IMR-90 (cell line): ENCODE measurements at regions of chr19 and their contacts with region 1.

Region 1: GRCh38 chr19:1269065-1269477 is at the start of gene CIRBP:
- DNase-seq: peak; percentile 98
- ATAC-seq: peak; percentile 76
- H3K4me3 ChIP-seq: peak within 1 kb of the TSS; percentile 68
- H3K27ac ChIP-seq: peak within 1 kb of the TSS; percentile 75
- H3K4me1 ChIP-seq: peaks cover 41% of the 10 kb centered on the region
- H3K27me3 ChIP-seq: no peaks in the 10 kb centered on the region
- CTCF ChIP-seq: no peak
- POLR2A ChIP-seq: peak; percentile 99
- RAD21 ChIP-seq: no peak
- total RNA-seq, gene CIRBP: 226 and 299 TPM in 2 replicates

Region 2: DNA sequence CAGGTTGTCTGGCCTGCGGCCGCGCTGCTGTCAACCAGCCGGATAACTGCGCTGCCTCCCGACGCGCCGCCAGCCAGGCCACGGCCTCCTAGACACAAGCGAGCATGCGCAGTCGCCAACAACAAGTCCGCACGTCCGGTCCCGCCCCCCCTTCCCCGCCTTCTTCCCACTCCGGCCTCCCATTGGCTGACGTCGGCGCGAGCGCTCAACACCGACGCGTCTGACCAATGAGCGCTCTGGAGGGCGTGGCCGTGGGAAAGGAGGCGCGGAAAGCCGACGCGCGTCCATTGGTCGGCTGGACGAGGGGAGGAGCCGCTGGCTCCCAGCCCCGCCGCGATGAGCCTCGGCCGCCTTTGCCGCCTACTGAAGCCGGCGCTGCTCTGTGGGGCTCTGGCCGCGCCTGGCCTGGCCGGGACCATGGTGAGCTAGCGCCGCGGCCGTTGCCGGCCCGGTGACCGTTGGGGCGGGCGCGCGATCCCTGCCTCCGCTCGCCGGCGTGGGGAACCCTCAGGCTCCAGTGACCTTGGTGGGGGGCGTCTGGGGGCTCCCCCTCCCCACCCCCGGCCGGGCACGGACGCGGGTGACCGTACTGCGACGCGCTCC is 165.3 kb before region 1 on chr19 and contains the start of gene GPX4:
- CTCF ChIA-PET with region 1: no interaction called
- POLR2A ChIA-PET with region 1: interaction called, 10 read pairs
- dilution Hi-C with region 1: no loop called
- in situ Hi-C with region 1: no loop called
- intact Hi-C with region 1: no loop called
- DNase-seq: peak; percentile 99
- ATAC-seq: peak; percentile 70
- H3K4me3 ChIP-seq: peak within 1 kb of the TSS; percentile 85
- H3K27ac ChIP-seq: peak within 1 kb of the TSS; percentile 97
- H3K4me1 ChIP-seq: peaks cover 12% of the 10 kb centered on the region
- H3K27me3 ChIP-seq: no peaks in the 10 kb centered on the region
- CTCF ChIP-seq: no peak
- POLR2A ChIP-seq: peak; percentile 98
- RAD21 ChIP-seq: 0 out of 2 replicates have a peak, but pooled peaks have one; percentile 7
- total RNA-seq, gene GPX4: 357 and 415 TPM in 2 replicates

Region 3: DNA sequence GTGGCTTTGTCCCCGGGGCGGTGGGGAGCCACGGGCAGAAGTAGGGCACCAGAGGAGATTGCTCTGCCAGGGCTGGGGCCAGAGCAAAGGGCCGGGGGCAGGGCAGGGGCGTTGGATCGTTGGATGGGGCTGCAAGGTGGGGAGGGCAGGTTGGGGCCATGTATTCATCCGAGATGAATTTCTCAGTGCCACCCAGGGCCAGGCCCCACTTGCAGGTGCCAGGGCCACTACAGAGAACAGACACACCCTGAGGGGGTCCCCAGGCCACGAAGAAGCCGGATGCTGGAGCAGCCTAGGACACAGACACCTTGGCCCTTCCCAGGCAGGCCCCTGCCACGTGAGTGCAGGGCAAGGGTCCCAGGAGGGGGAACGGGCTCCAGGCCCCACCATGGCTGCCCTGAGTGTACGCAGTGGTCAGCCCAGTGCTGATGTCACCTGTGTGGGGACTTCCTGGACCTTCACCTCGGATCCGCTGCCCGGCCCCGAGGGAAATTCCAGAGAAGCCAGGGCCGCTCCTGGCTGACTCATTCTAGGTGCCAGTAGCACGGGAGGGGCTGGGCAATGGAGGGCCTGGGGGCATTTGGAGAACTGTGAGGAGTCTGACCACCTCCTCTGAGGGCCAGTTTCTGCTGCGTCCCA is 85.4 kb before region 1 on chr19:
- CTCF ChIA-PET with region 1: no interaction called
- POLR2A ChIA-PET with region 1: no interaction called
- dilution Hi-C with region 1: no loop called
- in situ Hi-C with region 1: no loop called
- intact Hi-C with region 1: no loop called
- DNase-seq: peak; percentile 25
- ATAC-seq: no peak
- H3K4me3 ChIP-seq: no peak overlapping the region
- H3K27ac ChIP-seq: no peak overlapping the region
- H3K4me1 ChIP-seq: peaks cover 8% of the 10 kb centered on the region
- H3K27me3 ChIP-seq: no peaks in the 10 kb centered on the region
- CTCF ChIP-seq: no peak
- POLR2A ChIP-seq: no peak
- RAD21 ChIP-seq: no peak

Region 4: DNA sequence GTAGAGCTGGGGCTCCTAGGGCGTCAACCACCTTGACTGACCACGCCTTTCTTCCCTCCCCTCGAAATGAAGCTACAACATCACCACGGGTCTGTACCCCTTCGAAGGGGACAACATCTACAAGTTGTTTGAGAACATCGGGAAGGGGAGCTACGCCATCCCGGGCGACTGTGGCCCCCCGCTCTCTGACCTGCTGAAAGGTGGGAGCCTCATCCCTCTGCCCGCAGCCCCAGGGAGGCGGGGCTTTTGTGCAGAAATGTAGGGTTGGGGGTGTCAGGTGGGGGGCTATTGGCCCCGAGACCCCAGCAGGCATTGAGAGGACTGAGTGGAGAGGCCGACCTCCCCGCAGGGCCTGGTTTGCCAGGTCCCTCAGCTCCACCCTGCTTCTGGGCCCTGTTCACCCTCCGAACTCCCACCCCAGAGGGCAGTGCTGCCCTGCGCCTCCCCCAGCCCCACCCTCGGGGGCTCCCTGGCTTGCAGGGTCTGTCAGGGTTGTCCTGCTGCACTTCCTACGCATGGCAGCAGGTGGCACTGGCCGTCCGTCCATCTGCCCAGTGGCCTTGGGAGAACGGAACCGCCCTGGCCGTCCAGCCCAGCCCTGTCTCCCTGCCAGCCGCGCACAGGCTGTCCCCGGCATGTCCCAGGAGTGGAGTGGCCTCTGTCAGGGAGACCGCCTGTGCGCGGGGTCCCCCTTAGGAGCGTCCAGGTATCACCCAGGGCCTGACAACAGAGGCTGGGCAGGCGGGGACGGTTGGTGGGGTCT is 47.7 kb before region 1 on chr19:
- CTCF ChIA-PET with region 1: interaction called, 3 read pairs
- POLR2A ChIA-PET with region 1: no interaction called
- dilution Hi-C with region 1: no loop called
- in situ Hi-C with region 1: no loop called
- intact Hi-C with region 1: loop called (anchors 2 kb)
- DNase-seq: peak; percentile 54
- ATAC-seq: peak; percentile 76
- H3K4me3 ChIP-seq: no peak overlapping the region
- H3K27ac ChIP-seq: no peak overlapping the region
- H3K4me1 ChIP-seq: no peaks in the 10 kb centered on the region
- H3K27me3 ChIP-seq: no peaks in the 10 kb centered on the region
- CTCF ChIP-seq: peak; percentile 62
- POLR2A ChIP-seq: no peak; the same call in 1 of the 2 replicates
- RAD21 ChIP-seq: peak; percentile 55

Region 5: DNA sequence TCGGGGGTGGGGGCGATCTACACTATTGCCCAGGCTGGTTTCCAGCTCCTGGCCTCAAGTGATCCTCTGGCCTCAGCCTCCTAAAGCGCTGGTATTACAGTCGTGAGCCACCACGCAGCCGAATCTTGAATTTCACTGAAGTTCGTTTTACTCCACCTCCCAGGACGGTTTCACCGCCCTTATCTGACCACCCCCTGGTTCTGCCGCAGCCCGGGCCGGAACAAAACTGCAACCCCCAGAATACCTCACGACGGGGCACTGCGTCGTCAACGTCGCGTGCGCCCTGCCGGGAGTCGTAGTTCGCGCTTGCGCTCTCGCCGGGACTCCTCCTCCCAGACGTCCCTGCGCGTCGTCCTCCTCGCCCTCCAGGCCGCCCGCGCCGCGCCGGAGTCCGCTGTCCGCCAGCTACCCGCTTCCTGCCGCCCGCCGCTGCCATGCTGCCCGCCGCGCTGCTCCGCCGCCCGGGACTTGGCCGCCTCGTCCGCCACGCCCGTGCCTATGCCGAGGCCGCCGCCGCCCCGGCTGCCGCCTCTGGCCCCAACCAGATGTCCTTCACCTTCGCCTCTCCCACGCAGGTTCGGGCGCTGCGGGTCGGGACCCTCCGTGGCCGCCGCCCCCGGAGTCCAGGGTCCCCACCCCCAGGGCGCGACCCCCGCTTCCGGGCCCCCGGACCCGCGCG is 27.5 kb before region 1 on chr19 and contains the start of gene ATP5F1D:
- CTCF ChIA-PET with region 1: interaction called, 64 read pairs
- POLR2A ChIA-PET with region 1: interaction called, 62 read pairs
- dilution Hi-C with region 1: no loop called
- in situ Hi-C with region 1: no loop called
- intact Hi-C with region 1: loop called (anchors 1 kb)
- DNase-seq: peak; percentile 95
- ATAC-seq: peak; percentile 66
- H3K4me3 ChIP-seq: peak within 1 kb of the TSS; percentile 76
- H3K27ac ChIP-seq: peak within 1 kb of the TSS; percentile 83
- H3K4me1 ChIP-seq: peaks cover 25% of the 10 kb centered on the region
- H3K27me3 ChIP-seq: no peaks in the 10 kb centered on the region
- CTCF ChIP-seq: no peak
- POLR2A ChIP-seq: peak; percentile 56; the same call in 1 of the 2 replicates
- RAD21 ChIP-seq: no peak
- total RNA-seq, gene ATP5F1D: 7.3 and 13.6 TPM in 2 replicates

Region 6: GRCh38 chr19:1249298-1249989 is 19.6 kb before region 1 on chr19:
- CTCF ChIA-PET with region 1: interaction called, 64 read pairs
- POLR2A ChIA-PET with region 1: interaction called, 62 read pairs
- dilution Hi-C with region 1: no loop called
- in situ Hi-C with region 1: no loop called
- intact Hi-C with region 1: loop called (anchors 1 kb)
- DNase-seq: peak; percentile 96
- ATAC-seq: peak; percentile 38
- H3K4me3 ChIP-seq: peak overlapping the region; percentile 94
- H3K27ac ChIP-seq: peak overlapping the region; percentile 98
- H3K4me1 ChIP-seq: peaks cover 20% of the 10 kb centered on the region
- H3K27me3 ChIP-seq: no peaks in the 10 kb centered on the region
- CTCF ChIP-seq: no peak
- POLR2A ChIP-seq: peak; percentile 97
- RAD21 ChIP-seq: no peak

Region 7: DNA sequence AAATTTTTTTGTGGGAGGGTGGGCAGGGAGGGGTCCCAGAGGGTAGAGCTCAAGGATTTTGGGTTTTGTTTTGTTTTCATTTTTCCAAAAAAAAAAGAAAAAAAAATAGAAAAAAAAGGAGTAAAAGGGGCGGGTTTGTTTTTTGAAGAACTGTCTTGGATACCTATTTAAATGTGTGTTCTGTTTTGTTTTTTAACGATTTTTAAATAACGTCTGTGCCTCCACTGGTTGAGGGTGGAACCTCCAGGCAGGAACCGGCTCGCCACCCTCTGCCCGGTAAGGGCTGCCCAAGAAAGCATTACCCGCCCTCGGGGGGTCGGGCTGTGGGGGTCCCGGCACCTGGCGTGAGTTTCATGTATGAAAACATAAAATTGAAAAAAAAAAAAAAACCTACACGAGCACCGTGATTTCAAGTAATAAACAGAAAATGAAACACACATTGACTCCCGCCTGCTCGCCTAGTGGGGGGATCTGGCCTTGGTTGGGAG is 10.3 kb before region 1 on chr19:
- CTCF ChIA-PET with region 1: interaction called, 11 read pairs
- POLR2A ChIA-PET with region 1: interaction called, 28 read pairs
- dilution Hi-C with region 1: no loop called
- in situ Hi-C with region 1: no loop called
- intact Hi-C with region 1: loop called (anchors 1 kb)
- DNase-seq: no peak
- ATAC-seq: no peak
- H3K4me3 ChIP-seq: no peak overlapping the region
- H3K27ac ChIP-seq: peak overlapping the region; percentile 74
- H3K4me1 ChIP-seq: peaks cover 57% of the 10 kb centered on the region
- H3K27me3 ChIP-seq: no peaks in the 10 kb centered on the region
- CTCF ChIP-seq: no peak
- POLR2A ChIP-seq: no peak
- RAD21 ChIP-seq: no peak

Region 8: GRCh38 chr19:1406774-1407499 is 137.9 kb after region 1 on chr19:
- CTCF ChIA-PET with region 1: no interaction called
- POLR2A ChIA-PET with region 1: interaction called, 10 read pairs
- dilution Hi-C with region 1: no loop called
- in situ Hi-C with region 1: no loop called
- intact Hi-C with region 1: no loop called
- DNase-seq: peak; percentile 97
- ATAC-seq: peak; percentile 89
- H3K4me3 ChIP-seq: peak overlapping the region; percentile 63
- H3K27ac ChIP-seq: peak overlapping the region; percentile 83
- H3K4me1 ChIP-seq: peaks cover 25% of the 10 kb centered on the region
- H3K27me3 ChIP-seq: no peaks in the 10 kb centered on the region
- CTCF ChIP-seq: peak; percentile 46
- POLR2A ChIP-seq: no peak; the same call in 1 of the 2 replicates
- RAD21 ChIP-seq: peak; percentile 36

Region 9: DNA sequence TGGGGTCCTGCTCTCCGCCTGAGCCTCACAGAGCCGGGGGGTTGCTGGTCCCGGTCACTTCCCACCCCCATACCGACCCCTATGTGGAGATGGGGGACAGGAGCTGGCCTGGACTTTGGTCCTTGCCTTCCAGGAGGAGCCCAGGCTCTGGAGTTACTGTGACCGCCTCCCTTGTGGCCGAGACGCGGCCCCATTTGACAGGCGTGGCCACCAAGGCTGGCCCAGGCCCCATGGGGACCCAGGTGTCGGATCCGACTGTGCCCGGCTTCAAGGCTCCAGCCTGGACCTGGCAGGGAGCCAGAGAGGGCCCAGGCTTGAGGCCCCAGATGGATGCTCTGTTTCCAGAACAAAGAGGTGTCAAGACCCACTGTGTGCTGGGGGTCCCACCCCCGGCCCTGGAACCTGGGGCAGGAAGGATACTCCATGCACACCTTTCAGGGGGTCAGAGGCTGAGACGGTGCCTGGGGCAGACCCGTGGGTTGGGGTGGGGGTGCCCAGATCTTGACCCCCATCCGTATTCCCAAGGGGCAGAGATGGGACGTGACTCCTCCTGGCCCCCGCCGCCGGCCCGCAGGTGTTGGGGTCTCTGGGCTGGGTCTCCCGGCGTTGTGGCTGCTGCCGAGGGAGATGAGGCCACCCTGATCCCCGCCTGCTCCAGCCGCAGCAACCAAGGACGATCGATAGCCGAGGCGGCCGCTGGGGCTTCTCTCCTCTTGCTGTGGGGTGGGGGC is 431.1 kb after region 1 on chr19:
- CTCF ChIA-PET with region 1: no interaction called
- POLR2A ChIA-PET with region 1: no interaction called
- dilution Hi-C with region 1: no loop called
- in situ Hi-C with region 1: no loop called
- intact Hi-C with region 1: no loop called
- DNase-seq: no peak
- ATAC-seq: no peak
- H3K4me3 ChIP-seq: no peak overlapping the region
- H3K27ac ChIP-seq: no peak overlapping the region
- H3K4me1 ChIP-seq: no peaks in the 10 kb centered on the region
- H3K27me3 ChIP-seq: peaks cover 30% of the 10 kb centered on the region
- CTCF ChIP-seq: no peak
- POLR2A ChIP-seq: no peak
- RAD21 ChIP-seq: no peak